B cell (primary cell): ENCODE measurements at regions of chr5 and their contacts with region 1.

Region 1: DNA sequence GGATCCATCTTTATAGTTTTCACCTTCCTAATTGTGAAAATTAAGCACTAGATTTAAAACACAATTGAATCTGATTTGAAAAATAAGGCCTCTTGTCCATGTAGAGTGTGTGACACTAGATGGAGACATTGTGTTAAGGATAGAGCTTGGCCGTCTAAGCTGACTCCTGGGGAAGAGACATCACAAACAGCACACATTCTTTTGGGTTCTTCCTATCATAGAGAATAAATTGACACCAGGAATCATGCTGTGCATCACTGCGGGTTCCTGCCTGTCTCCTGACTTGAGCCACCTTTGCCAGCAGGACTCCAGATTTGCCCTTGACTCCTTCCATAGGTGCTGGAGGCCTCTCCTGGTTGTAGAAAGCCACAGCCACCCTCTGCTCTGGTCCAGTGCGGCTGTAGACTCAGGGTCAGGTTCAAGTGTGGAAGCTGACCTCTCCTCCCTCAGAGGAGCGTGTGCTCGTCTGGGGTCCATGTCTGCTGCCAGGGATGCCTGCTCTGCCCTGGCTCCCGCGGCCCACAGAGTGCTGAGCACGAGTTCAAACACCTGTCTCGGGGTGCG is 11.2 kb downstream of the ROPN1L start:
- DNase-seq: peak; percentile 83
- ATAC-seq: peak; percentile 86
- H3K4me3 ChIP-seq: no peak overlapping the region
- H3K4me3 Mint-ChIP-seq: no peak overlapping the region
- H3K27ac ChIP-seq: no peak overlapping the region
- H3K27ac Mint-ChIP-seq: no peak overlapping the region
- H3K4me1 ChIP-seq: no peaks in the 10 kb centered on the region
- H3K4me1 Mint-ChIP-seq: no peaks in the 10 kb centered on the region
- H3K27me3 ChIP-seq: no peaks in the 10 kb centered on the region
- H3K27me3 Mint-ChIP-seq: no peaks in the 10 kb centered on the region
- CTCF ChIP-seq: peak; percentile 85

Region 2: DNA sequence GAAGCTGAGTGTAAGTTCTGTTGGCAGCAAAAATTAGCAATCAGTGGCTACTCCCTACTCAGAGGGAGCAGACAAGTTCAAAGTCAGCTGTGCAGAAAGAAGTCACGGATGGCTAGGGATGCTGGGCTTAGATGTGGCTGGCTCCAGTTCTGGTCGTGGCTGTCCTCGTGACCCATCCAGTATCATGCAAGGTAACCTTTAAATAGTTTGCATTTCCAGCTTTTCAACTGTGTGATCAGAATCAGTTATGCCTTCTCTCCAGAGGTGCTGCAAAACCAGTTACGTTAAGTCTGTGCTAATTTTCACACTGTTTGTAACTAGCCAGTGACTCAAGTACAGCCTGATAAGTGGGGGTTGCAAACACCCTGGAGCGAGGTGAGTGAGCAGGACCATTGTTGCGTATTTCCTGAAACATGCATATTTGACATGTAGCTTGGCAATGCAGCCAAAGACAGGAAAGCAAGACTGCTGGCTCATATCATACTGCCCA is 505.6 kb before region 1 on chr5:
- CTCF ChIA-PET with region 1: no interaction called
- POLR2A ChIA-PET with region 1: no interaction called
- intact Hi-C with region 1: no loop called
- DNase-seq: no peak
- ATAC-seq: no peak
- H3K4me3 ChIP-seq: no peak overlapping the region
- H3K4me3 Mint-ChIP-seq: no peak overlapping the region
- H3K27ac ChIP-seq: no peak overlapping the region
- H3K27ac Mint-ChIP-seq: no peak overlapping the region
- H3K4me1 ChIP-seq: no peaks in the 10 kb centered on the region
- H3K4me1 Mint-ChIP-seq: peaks cover 6% of the 10 kb centered on the region
- H3K27me3 ChIP-seq: no peaks in the 10 kb centered on the region
- H3K27me3 Mint-ChIP-seq: no peaks in the 10 kb centered on the region
- CTCF ChIP-seq: no peak

Region 3: DNA sequence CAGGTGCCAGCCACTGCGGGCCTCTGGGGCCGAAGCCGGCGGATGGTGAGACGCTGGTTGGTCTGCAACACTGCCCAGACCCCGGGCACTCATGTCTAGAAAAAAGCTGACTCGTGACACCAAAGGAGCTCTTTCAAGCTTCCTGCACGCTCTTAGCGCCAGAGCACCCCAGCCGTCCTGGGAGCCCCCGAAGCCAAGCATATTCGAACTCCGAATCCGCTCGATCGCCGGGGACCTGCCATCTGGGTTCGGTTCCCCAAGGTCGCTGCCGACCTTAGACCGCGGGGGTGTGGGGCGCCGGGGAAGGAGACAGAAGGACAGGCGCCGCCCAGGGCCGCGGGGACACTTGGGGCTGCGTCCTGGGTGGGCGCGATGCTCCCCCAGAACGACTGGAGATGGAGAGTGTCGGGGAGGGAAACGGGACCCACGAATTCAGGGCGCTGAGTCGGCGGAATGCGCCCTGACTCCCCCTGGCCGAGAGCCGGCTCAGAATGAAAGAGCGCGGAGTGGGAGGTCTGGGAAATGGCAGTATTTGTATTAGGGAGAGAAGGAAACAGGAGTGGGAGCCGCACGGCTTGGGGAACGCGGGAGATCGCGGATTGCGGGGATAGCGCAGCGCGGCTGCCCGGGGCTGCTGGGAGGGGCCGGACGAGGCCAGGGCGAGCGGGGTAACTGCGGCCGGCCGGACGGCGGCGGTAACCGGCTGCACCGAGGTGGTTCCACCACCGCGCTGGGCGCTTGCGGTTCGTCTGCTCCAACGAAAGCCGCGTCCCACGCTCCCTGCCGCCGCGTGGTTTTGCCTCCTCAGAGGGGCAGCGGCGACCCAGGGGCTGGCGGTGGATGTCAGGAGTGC is 119.5 kb before region 1 on chr5:
- CTCF ChIA-PET with region 1: no interaction called
- POLR2A ChIA-PET with region 1: no interaction called
- intact Hi-C with region 1: no loop called
- DNase-seq: peak; percentile 49
- ATAC-seq: peak; percentile 49
- H3K4me3 ChIP-seq: peak overlapping the region in 4 of 5 experiments; percentile 33 to 58 (median 58)
- H3K4me3 Mint-ChIP-seq: peak overlapping the region; percentile 93
- H3K27ac ChIP-seq: peak overlapping the region in 1 of 2 donors; percentile 23
- H3K27ac Mint-ChIP-seq: no peak overlapping the region
- H3K4me1 ChIP-seq: peaks cover 10 to 15% of the 10 kb centered on the region in 2 donors
- H3K4me1 Mint-ChIP-seq: peaks cover 16% of the 10 kb centered on the region
- H3K27me3 ChIP-seq: peaks cover 0 to 44% (median 20%) of the 10 kb centered on the region in 4 experiments
- H3K27me3 Mint-ChIP-seq: peaks cover 49% of the 10 kb centered on the region
- CTCF ChIP-seq: no peak

Region 4: GRCh38 chr5:10489810-10490426 is 37.1 kb after region 1 on chr5:
- CTCF ChIA-PET with region 1: interaction called, 25 read pairs
- POLR2A ChIA-PET with region 1: no interaction called
- intact Hi-C with region 1: no loop called
- DNase-seq: peak; percentile 63
- ATAC-seq: peak; percentile 93
- H3K4me3 ChIP-seq: peak overlapping the region in 1 of 5 experiments; percentile 35
- H3K4me3 Mint-ChIP-seq: peak overlapping the region; percentile 72
- H3K27ac ChIP-seq: peak overlapping the region; percentile 4 to 8
- H3K27ac Mint-ChIP-seq: peak overlapping the region; percentile 71
- H3K4me1 ChIP-seq: peaks cover 25 to 39% of the 10 kb centered on the region in 2 donors
- H3K4me1 Mint-ChIP-seq: peaks cover 51% of the 10 kb centered on the region
- H3K27me3 ChIP-seq: no peaks in the 10 kb centered on the region
- H3K27me3 Mint-ChIP-seq: no peaks in the 10 kb centered on the region
- CTCF ChIP-seq: no peak

Region 5: GRCh38 chr5:10577371-10578292 is 124.8 kb after region 1 on chr5:
- CTCF ChIA-PET with region 1: interaction called, 4 read pairs
- POLR2A ChIA-PET with region 1: no interaction called
- intact Hi-C with region 1: loop called (anchors 2 kb)
- DNase-seq: peak; percentile 12
- ATAC-seq: no peak
- H3K4me3 ChIP-seq: no peak overlapping the region
- H3K4me3 Mint-ChIP-seq: peak overlapping the region; percentile 52
- H3K27ac ChIP-seq: no peak overlapping the region
- H3K27ac Mint-ChIP-seq: peak overlapping the region; percentile 64
- H3K4me1 ChIP-seq: peaks cover 59 to 60% of the 10 kb centered on the region in 2 donors
- H3K4me1 Mint-ChIP-seq: peaks cover 81% of the 10 kb centered on the region
- H3K27me3 ChIP-seq: no peaks in the 10 kb centered on the region
- H3K27me3 Mint-ChIP-seq: no peaks in the 10 kb centered on the region
- CTCF ChIP-seq: no peak

Region 6: GRCh38 chr5:10621832-10622231 is 169.0 kb after region 1 on chr5:
- CTCF ChIA-PET with region 1: interaction called, 326 read pairs
- POLR2A ChIA-PET with region 1: no interaction called
- intact Hi-C with region 1: no loop called
- DNase-seq: no peak
- ATAC-seq: no peak
- H3K4me3 ChIP-seq: no peak overlapping the region
- H3K4me3 Mint-ChIP-seq: no peak overlapping the region
- H3K27ac ChIP-seq: no peak overlapping the region
- H3K27ac Mint-ChIP-seq: no peak overlapping the region
- H3K4me1 ChIP-seq: peaks cover 0 to 3% of the 10 kb centered on the region in 2 donors
- H3K4me1 Mint-ChIP-seq: peaks cover 31% of the 10 kb centered on the region
- H3K27me3 ChIP-seq: no peaks in the 10 kb centered on the region
- H3K27me3 Mint-ChIP-seq: no peaks in the 10 kb centered on the region
- CTCF ChIP-seq: no peak

Region 7: DNA sequence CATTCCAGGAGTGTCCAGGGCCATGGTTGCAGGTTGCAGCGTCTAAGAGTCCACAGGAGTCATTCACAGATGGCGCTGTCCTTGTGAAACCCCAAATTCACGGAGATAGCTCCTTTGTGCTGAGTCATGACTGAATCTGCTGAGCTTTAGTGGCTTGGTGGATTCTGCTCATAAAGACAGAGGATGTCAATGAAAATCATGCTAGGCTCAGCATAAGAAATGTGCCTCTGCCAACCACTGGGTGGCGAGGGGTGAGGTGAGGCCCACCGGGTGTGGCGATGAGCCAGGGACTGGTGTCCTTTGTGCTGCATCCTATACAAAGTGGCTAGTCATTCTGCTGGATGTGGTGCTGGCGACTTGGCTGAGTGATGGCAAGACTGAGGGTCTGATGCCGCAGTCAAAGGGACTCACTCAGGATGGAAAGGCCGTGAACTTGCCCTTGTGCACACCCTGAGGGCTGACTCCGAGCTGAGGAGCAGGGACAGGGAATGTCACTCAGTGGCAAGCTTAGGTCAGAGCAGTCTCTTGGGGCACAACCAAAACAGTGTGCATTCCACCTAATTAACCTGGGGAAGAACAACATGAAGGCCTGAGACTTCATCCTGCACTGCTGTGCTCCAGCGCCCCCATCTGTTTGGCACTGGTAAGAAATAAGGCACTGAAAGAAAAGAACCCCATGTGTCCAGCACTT is 236.7 kb after region 1 on chr5:
- CTCF ChIA-PET with region 1: interaction called, 31 read pairs
- POLR2A ChIA-PET with region 1: no interaction called
- intact Hi-C with region 1: loop called (anchors 1 kb)
- DNase-seq: peak; percentile 34
- ATAC-seq: peak; percentile 49
- H3K4me3 ChIP-seq: no peak overlapping the region
- H3K4me3 Mint-ChIP-seq: no peak overlapping the region
- H3K27ac ChIP-seq: no peak overlapping the region
- H3K27ac Mint-ChIP-seq: peak overlapping the region; percentile 12
- H3K4me1 ChIP-seq: peaks cover 0 to 5% of the 10 kb centered on the region in 2 donors
- H3K4me1 Mint-ChIP-seq: peaks cover 12% of the 10 kb centered on the region
- H3K27me3 ChIP-seq: no peaks in the 10 kb centered on the region
- H3K27me3 Mint-ChIP-seq: no peaks in the 10 kb centered on the region
- CTCF ChIP-seq: no peak

Region 8: DNA sequence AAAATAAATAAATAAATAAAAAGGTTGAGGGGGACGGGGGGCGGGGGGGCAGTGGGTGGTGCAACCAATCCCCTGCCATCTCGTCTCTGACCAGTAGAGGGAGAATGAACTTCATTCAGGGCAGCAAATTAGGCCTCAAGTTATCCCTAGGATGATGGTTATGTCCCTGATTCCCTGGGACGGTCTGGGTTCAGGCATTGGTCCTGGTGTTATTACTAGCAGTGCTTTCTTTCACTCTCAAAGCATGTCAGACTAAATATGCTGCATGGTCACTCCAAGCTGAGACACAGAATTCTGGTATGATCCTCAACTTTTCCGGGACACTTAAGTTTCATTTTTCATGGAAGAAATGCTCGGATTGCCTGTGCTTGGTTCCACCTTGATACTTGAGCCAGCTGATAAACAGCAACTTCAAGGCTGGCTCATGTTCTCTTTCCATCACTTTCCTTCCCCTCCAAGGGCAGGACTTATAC is 248.8 kb after region 1 on chr5:
- CTCF ChIA-PET with region 1: interaction called, 15 read pairs
- POLR2A ChIA-PET with region 1: no interaction called
- intact Hi-C with region 1: no loop called
- DNase-seq: peak; percentile 56
- ATAC-seq: no peak
- H3K4me3 ChIP-seq: no peak overlapping the region
- H3K4me3 Mint-ChIP-seq: no peak overlapping the region
- H3K27ac ChIP-seq: no peak overlapping the region
- H3K27ac Mint-ChIP-seq: no peak overlapping the region
- H3K4me1 ChIP-seq: peaks cover 20 to 43% of the 10 kb centered on the region in 2 donors
- H3K4me1 Mint-ChIP-seq: peaks cover 47% of the 10 kb centered on the region
- H3K27me3 ChIP-seq: no peaks in the 10 kb centered on the region
- H3K27me3 Mint-ChIP-seq: no peaks in the 10 kb centered on the region
- CTCF ChIP-seq: peak; percentile 89

Region 9: DNA sequence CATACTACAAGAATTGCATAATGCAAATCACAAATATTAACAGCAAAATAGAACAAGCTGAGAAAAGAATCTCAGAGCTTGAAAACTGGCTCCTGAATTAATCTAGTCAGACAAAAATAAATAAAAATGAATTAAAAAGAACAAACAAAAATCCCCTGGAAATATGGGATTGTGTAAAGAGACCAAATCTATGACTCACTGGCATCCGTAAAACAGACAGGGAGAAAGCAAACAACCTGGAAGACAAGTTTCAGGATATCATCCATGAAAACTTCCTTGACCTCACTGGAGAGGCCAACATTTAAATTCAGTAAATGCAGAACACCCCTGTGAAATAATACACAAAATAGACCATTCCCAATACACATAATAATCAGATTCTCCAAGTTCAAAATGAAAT is 1680.7 kb after region 1 on chr5:
- CTCF ChIA-PET with region 1: no interaction called
- POLR2A ChIA-PET with region 1: no interaction called
- intact Hi-C with region 1: no loop called
- DNase-seq: no peak
- ATAC-seq: no peak
- H3K4me3 ChIP-seq: no peak overlapping the region
- H3K4me3 Mint-ChIP-seq: no peak overlapping the region
- H3K27ac ChIP-seq: no peak overlapping the region
- H3K27ac Mint-ChIP-seq: no peak overlapping the region
- H3K4me1 ChIP-seq: no peaks in the 10 kb centered on the region
- H3K4me1 Mint-ChIP-seq: no peaks in the 10 kb centered on the region
- H3K27me3 ChIP-seq: no peaks in the 10 kb centered on the region
- H3K27me3 Mint-ChIP-seq: no peaks in the 10 kb centered on the region
- CTCF ChIP-seq: no peak